IMR-90 (cell line): ENCODE measurements at regions of chr10 and their contacts with region 1.

Region 1: DNA sequence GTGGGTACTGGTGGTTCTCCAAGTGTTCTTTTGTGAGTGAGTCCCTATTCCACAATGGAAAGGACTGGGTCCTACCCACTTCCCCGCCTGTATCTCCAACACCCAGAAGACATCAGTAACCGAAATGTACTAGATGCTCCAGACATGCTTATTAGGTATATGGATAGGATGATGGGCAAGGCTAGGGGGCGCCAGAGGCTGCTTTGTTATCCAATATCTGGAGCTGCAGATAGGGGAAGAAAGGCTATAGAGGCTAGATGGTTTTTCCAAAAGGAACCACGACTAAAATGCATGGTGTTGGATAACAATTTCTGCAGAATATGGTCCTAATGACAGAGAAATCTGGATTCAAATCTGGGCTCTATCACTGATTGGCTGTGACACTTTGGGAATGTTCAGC is 56.2 kb upstream of the TM9SF3 start:
- DNase-seq: peak; percentile 31
- ATAC-seq: no peak
- H3K4me3 ChIP-seq: no peak overlapping the region
- H3K27ac ChIP-seq: no peak overlapping the region
- H3K4me1 ChIP-seq: no peaks in the 10 kb centered on the region
- H3K27me3 ChIP-seq: peaks cover 33% of the 10 kb centered on the region
- CTCF ChIP-seq: peak; percentile 66
- POLR2A ChIP-seq: no peak
- RAD21 ChIP-seq: peak; percentile 68

Region 2: DNA sequence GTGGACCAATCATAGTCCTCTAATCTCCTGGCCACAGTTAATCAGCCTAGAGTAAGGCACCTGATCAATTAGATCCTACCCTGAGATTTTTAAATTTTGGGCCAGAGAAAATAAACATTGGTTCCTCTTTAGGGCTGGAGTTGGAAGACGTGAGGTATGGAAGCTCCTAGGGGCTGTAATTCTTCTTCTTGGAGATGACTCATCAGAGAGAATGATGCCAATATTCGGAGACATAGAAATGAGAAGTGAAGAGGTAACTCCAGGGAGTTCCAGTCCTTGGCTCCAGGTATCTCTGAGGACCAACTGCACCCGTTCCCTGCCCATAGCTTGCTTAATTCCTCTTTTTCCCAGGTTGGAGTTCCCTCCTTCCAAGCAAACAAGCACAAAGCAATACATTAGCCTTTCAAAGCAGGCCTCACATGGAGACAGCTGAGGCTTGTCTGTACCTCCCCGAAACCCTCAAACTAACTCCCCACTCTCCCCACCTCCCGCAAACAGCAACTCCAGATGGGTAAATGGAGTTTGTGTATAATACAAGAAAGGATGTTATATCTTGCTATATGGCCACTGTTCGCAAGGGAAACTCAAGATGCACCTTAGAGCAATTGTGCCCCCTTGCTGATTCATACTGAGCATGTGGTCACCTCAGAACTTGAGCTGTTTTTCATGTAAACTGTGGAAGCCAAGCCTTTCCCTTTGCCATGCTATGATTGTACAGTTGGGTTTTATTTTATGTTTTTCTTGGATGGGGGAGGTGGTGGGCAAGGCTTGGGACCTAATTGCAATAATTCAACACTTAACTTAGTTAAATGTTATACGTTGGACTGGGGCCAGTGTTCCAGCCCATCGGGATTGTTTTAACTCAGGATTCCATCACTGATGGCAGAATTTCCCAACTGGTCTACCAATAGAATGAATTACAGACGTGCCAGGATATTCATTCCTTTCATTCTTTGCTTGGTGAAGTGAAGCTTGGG is 48.1 kb after region 1 on chr10:
- CTCF ChIA-PET with region 1: interaction called, 4 read pairs
- POLR2A ChIA-PET with region 1: no interaction called
- dilution Hi-C with region 1: no loop called
- in situ Hi-C with region 1: no loop called
- intact Hi-C with region 1: loop called (anchors 2 kb)
- DNase-seq: peak; percentile 33
- ATAC-seq: peak; percentile 67
- H3K4me3 ChIP-seq: no peak overlapping the region
- H3K27ac ChIP-seq: no peak overlapping the region
- H3K4me1 ChIP-seq: peaks cover 5% of the 10 kb centered on the region
- H3K27me3 ChIP-seq: no peaks in the 10 kb centered on the region
- CTCF ChIP-seq: peak; percentile 21; the same call in 1 of the 2 replicates
- POLR2A ChIP-seq: no peak
- RAD21 ChIP-seq: peak; percentile 33

Region 3: GRCh38 chr10:96743988-96744585 is 101.1 kb after region 1 on chr10:
- CTCF ChIA-PET with region 1: interaction called, 3 read pairs
- POLR2A ChIA-PET with region 1: no interaction called
- dilution Hi-C with region 1: no loop called
- in situ Hi-C with region 1: no loop called
- intact Hi-C with region 1: loop called (anchors 2 kb)
- DNase-seq: peak; percentile 29
- ATAC-seq: peak; percentile 57
- H3K4me3 ChIP-seq: no peak overlapping the region
- H3K27ac ChIP-seq: no peak overlapping the region
- H3K4me1 ChIP-seq: no peaks in the 10 kb centered on the region
- H3K27me3 ChIP-seq: peaks cover 5% of the 10 kb centered on the region; the same call in 1 of the 2 replicates
- CTCF ChIP-seq: peak; percentile 51
- POLR2A ChIP-seq: no peak
- RAD21 ChIP-seq: peak; percentile 45; the same call in 1 of the 2 replicates

Region 4: DNA sequence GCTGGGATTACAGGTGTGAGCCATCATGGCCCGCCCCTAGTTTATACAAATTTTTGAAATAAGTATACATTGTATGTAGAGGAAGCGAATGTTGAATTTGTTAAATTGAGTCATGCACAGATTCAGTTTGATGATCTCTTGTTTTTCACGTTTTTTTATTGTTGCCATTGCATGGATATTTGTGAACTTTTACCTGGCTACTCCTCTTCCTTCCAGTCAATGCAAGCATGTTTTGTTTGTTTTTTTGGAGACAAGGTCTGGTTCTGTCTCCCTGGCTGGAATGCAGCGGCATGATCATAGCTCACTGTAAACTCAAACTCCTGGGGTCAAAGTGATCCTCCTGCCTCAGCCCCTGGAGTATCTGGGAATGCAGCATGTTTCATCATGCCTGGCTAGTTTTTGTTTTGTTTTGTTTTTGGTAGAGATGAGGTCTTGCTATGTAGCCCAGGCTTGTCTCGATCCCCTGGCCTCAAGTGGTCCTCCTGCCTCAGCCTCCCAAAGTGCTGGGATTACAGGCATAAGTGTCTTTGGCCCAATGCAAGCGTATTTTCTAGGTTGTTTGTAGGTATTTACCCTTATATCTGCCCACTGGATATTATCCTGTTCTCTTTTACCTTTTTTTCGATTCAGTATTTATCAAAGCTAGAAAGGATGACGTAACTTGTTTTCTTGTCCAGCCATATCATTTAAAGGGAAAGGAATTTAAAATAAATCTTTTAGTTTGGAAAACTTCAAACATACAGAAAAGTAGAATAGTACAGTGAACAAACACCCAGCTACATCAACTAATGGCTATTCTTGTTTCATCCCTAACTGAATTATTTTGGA is 200.1 kb after region 1 on chr10:
- CTCF ChIA-PET with region 1: no interaction called
- POLR2A ChIA-PET with region 1: no interaction called
- dilution Hi-C with region 1: no loop called
- in situ Hi-C with region 1: no loop called
- intact Hi-C with region 1: no loop called
- DNase-seq: no peak
- ATAC-seq: no peak
- H3K4me3 ChIP-seq: no peak overlapping the region
- H3K27ac ChIP-seq: no peak overlapping the region
- H3K4me1 ChIP-seq: peaks cover 13% of the 10 kb centered on the region
- H3K27me3 ChIP-seq: no peaks in the 10 kb centered on the region
- CTCF ChIP-seq: no peak
- POLR2A ChIP-seq: no peak
- RAD21 ChIP-seq: no peak